ENCODE measurements at regions of chr9 and their contacts with region 1.

Region 1: GRCh38 chr9:88388172-88388885 is at the start of gene SPIN1:
- DNase-seq: peak; percentile 88
- H3K4me3 ChIP-seq: peak within 1 kb of the TSS; percentile 54 to 97 (median 96)
- H3K27ac ChIP-seq: peak within 1 kb of the TSS; percentile 87 to 96 (median 95)
- H3K4me1 ChIP-seq: peaks cover 0 to 38% (median 28%) of the 10 kb centered on the region in 4 donors
- H3K27me3 ChIP-seq: no peaks in the 10 kb centered on the region
- CTCF ChIP-seq: peak in 1 of 4 experiments; percentile 46
- EP300 ChIP-seq: no peak
- POLR2A ChIP-seq: no peak
- total RNA-seq, gene SPIN1: 79.2 to 102 (median 83.1) TPM

Region 2: DNA sequence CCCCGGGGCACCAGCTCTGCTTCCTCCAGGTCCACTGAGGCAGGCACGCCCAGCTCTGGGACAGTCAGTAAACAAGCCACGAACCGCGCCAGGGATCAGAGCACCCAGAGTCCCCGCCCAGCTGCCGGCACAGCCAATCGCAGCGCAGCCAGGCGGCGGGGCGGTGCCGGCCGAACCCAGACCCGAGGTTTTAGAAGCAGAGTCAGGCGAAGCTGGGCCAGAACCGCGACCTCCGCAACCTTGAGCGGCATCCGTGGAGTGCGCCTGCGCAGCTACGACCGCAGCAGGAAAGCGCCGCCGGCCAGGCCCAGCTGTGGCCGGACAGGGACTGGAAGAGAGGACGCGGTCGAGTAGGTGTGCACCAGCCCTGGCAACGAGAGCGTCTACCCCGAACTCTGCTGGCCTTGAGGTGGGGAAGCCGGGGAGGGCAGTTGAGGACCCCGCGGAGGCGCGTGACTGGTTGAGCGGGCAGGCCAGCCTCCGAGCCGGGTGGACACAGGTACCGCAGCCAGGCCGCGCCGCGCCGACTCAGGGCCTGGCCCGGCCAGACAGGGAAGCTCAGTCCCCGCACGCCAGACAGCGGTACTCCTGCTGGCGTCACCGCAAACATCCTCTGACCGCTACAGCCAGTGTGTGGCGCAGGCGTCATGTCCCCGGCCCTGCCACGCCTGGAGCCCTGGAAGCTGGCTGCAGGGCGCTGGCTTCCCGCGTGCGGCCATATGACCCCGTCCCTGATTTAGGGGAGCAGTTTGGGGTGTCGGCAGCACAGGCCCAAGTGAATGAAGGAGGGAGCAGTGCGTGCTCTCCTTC is 662.2 kb before region 1 on chr9 and contains the start of gene CTSL:
- intact Hi-C with region 1: loop called (anchors 5 kb)
- DNase-seq: peak; percentile 98
- H3K4me3 ChIP-seq: peak within 1 kb of the TSS; percentile 59 to 83 (median 72)
- H3K27ac ChIP-seq: peak within 1 kb of the TSS; percentile 94 to 97 (median 95)
- H3K4me1 ChIP-seq: peaks cover 0 to 51% (median 36%) of the 10 kb centered on the region in 4 donors
- H3K27me3 ChIP-seq: no peaks in the 10 kb centered on the region
- CTCF ChIP-seq: peak in 1 of 4 experiments; percentile 19
- EP300 ChIP-seq: peak in 1 of 4 donors; percentile 42
- POLR2A ChIP-seq: peak in 1 of 2 donors; percentile 63
- total RNA-seq, gene CTSL: 107 to 179 (median 147) TPM

Region 3: DNA sequence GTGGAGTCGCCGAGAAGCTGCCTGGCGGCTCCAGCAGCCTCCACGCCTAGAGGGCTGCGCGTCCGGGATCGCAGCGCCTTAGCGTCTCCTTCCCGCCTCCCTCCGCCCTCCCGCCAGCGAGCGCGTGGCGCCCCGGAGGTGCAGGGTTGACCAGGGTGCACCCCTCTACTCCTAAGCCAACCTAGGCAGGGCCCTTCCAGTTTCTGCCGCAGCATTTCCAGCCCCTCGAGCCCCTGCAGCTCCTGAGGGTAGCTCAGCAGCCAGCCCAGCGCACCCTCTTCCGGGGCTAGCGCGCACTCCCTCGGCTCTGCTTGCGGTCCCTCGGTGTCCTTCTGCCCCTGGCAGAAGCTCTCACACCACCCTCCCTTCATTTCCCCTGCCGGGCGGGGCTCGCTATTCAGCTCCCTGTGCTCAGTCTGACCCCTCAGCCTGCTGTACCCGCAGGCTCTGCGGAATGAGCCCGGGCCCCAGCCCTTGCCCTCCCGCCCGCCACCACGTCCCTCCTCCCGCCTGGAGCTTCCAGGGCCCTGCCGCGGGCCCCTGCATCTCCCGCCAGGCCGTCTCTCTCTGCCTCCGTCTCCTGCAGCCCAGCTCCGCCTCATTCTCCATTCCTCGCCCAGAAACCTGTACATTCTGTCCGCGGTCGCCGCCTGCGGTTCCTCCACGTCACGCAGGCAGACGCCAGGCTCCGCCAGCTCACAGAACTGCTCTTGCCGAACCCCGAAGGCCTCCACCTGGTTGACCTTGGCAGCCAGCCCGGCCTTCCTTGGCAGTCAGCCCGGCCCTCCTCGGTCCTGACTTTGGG is 311.8 kb before region 1 on chr9:
- intact Hi-C with region 1: loop called (anchors 10 kb)
- DNase-seq: peak; percentile 88
- H3K4me3 ChIP-seq: peak overlapping the region; percentile 40 to 60 (median 56)
- H3K27ac ChIP-seq: peak overlapping the region; percentile 66 to 84 (median 82)
- H3K4me1 ChIP-seq: peaks cover 0 to 18% (median 12%) of the 10 kb centered on the region in 4 donors
- H3K27me3 ChIP-seq: no peaks in the 10 kb centered on the region
- CTCF ChIP-seq: peak in 3 of 4 experiments; percentile 4 to 29 (median 12)
- EP300 ChIP-seq: peak in 1 of 4 donors; percentile 17
- POLR2A ChIP-seq: no peak

Region 4: DNA sequence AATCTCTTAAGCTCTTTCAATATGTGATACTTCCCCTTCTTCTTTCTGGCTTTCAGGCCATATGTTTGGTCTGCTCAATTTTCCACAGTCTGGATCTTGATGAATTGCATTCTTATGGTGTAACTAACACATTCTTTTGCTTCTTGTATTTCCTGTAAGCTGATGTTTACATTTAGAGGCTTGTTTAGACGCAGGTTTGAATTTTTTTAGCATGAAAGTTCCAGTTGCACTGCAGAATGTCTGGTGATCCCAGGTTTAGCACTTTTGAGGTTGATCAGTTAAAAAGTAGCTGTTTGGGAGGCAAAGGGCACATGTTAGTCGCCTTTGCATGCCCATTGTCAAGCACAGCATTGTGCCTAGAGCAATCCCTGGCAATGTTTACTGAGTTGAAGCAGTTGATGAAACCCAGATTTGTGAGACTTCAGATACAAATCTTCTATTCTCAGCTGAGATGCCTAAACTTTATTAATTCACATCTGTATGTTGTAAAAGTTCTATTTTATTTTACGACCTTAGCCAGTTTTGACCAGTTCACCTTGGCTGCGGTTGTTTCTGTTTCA is 190.5 kb before region 1 on chr9:
- intact Hi-C with region 1: loop called (anchors 5 kb)
- DNase-seq: no peak
- H3K4me3 ChIP-seq: peak overlapping the region in 3 of 4 donors; percentile 31 to 40 (median 36)
- H3K27ac ChIP-seq: peak overlapping the region; percentile 64 to 82 (median 76)
- H3K4me1 ChIP-seq: peaks cover 0 to 37% (median 32%) of the 10 kb centered on the region in 4 donors
- H3K27me3 ChIP-seq: no peaks in the 10 kb centered on the region
- CTCF ChIP-seq: no peak
- EP300 ChIP-seq: peak in 3 of 4 donors; percentile 59 to 79 (median 73)
- POLR2A ChIP-seq: no peak

Region 5: DNA sequence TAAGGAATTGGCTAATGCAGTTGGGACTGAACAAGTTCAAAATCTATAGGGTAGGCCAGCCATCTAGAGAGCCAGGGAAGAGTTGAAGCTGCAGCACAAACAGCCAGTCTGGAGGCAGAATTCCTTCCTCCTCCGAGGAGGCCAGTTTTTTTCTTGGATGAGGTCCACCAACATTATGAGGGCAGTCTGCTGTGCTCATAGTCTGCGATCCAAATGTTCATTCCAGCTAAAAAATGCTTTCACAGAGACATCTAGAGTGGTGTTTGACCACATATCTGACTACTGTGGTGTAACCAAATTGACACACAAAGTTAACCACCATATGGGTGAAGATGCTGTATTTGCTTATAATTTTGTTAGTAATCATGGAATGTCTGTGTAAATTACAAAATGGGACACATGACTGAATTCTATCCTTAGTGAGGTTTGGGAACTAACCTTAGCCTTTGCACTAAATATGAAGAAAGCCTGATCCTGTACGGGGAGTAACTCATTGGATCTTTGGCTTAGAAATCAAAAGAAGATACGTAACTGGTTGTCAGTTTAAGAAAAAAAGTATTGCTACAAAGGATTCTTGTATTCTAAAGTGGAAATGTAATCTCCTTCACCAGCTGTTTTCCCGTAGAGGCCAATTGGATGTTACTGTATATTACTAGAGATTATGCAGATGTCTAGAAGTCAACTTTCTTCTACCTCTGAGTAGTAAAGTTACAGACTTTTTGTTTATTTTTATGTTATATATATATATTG is 70.6 kb after region 1 on chr9:
- intact Hi-C with region 1: no loop called
- DNase-seq: no peak
- H3K4me3 ChIP-seq: no peak overlapping the region
- H3K27ac ChIP-seq: peak overlapping the region in 1 of 4 donors; percentile 10
- H3K4me1 ChIP-seq: peaks cover 0 to 32% (median 18%) of the 10 kb centered on the region in 4 donors
- H3K27me3 ChIP-seq: no peaks in the 10 kb centered on the region
- CTCF ChIP-seq: no peak
- EP300 ChIP-seq: no peak
- POLR2A ChIP-seq: no peak

Region 6: GRCh38 chr9:88578121-88579054 is 190.1 kb after region 1 on chr9:
- intact Hi-C with region 1: loop called (anchors 5 kb)
- DNase-seq: peak; percentile 89
- H3K4me3 ChIP-seq: no peak overlapping the region
- H3K27ac ChIP-seq: no peak overlapping the region
- H3K4me1 ChIP-seq: peaks cover 0 to 22% (median 13%) of the 10 kb centered on the region in 4 donors
- H3K27me3 ChIP-seq: no peaks in the 10 kb centered on the region
- CTCF ChIP-seq: peak; percentile 67 to 98 (median 90)
- EP300 ChIP-seq: no peak
- POLR2A ChIP-seq: no peak

Measured in sigmoid colon (tissue), 7 donors.